A673 (cell line): ENCODE measurements at regions of chr10 and their contacts with region 1.

Region 1: GRCh38 chr10:32269343-32270105 is 77.4 kb downstream of the EPC1 start:
- DNase-seq: no peak
- H3K4me3 ChIP-seq: no peak overlapping the region
- H3K27ac ChIP-seq: peak overlapping the region; percentile 4
- H3K4me1 ChIP-seq: no peaks in the 10 kb centered on the region
- H3K27me3 ChIP-seq: no peaks in the 10 kb centered on the region
- CTCF ChIP-seq: no peak

Region 2: DNA sequence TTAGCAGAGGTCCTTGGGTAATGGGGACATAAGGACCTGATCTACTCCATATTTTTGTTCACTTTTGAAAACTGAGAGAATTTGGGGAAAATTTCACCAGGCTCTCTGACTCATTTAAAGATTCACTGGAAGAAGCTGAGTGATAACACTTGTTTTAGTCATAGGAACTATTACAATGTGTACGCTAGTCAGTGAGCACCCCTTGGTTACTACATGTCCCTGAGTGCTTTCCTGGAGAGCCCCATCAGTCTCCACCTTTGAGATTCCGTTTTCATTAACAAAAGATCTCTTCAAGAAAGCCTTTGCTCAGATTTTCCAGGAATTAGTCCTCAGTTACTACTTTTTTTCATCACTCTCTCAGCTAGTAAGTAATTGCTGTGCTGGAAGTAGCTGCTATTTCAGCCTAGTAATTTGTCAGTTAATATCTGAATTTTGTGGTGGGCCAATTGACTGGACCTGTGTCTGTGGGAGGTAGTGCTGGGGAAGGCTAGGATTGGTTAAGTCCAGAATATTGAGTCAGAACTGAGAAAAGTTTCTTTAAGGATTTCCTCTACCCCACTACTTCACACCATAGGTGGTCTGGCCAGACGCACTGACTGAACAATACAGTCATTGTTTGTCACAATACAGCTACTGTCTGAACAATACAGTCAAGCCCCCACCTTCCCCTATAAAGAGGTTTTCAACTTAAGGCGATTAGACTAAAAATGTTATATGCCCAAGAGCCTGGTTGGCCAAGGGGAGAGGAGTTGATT is 411.5 kb after region 1 on chr10:
- CTCF ChIA-PET with region 1: no interaction called
- POLR2A ChIA-PET with region 1: no interaction called
- intact Hi-C with region 1: no loop called
- DNase-seq: peak; percentile 86
- H3K4me3 ChIP-seq: no peak overlapping the region
- H3K27ac ChIP-seq: peak overlapping the region; percentile 71
- H3K4me1 ChIP-seq: peaks cover 5% of the 10 kb centered on the region
- H3K27me3 ChIP-seq: no peaks in the 10 kb centered on the region
- CTCF ChIP-seq: no peak

Region 3: GRCh38 chr10:32985341-32985764 is 715.8 kb after region 1 on chr10:
- CTCF ChIA-PET with region 1: no interaction called
- POLR2A ChIA-PET with region 1: interaction called, 12 read pairs
- intact Hi-C with region 1: no loop called
- DNase-seq: no peak
- H3K4me3 ChIP-seq: no peak overlapping the region
- H3K27ac ChIP-seq: no peak overlapping the region
- H3K4me1 ChIP-seq: peaks cover 13% of the 10 kb centered on the region
- H3K27me3 ChIP-seq: no peaks in the 10 kb centered on the region
- CTCF ChIP-seq: no peak